ENCODE measurements at regions of chr3 and their contacts with region 1.

Region 1: DNA sequence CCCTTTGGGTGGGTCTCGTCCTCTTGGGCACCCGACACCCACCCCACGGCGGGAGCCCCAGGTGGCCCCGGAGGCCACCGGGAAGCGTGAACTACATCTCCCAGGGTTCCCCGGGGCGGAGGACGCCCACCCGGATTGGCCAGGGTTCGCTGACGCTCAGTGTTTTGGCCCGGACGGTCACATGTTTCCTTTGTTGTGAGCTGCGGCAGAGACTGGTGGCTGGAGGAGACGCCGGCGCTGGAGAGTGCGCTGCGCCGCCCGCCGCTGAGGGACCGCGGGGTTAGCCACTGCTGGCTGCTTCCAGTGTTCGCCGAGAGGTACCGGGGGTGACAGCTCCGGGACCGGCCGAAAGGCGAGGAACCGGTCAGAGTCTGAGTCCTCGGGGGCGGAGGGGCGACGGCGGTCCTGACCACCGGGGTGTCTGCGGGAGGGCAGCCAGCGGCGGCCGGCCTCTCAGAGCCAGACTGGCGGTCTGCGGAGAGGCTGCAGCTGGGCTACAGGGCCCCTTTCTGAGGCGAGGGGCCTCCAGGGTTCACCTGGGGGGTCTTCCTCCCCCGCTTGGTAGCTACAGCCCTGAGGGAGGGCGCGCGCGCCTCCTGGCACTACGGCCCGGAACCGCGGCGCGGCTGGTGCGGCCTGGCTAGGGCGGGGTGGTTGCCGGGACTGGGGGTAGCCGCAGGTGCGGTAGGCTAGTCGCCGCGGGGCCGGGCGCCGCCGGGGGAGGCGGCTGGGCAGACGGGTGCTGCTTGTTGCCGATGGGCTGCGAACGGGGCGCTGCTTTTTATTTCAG is at the start of gene KLHL24:
- DNase-seq: peak; percentile 95
- H3K4me3 Mint-ChIP-seq: peak within 1 kb of the TSS; percentile 92
- H3K27ac Mint-ChIP-seq: peak within 1 kb of the TSS; percentile 88
- H3K4me1 Mint-ChIP-seq: peaks cover 28% of the 10 kb centered on the region
- H3K27me3 Mint-ChIP-seq: no peaks in the 10 kb centered on the region
- total RNA-seq, gene KLHL24: 15.6 to 19.5 TPM

Region 2: GRCh38 chr3:183265834-183266417 is 369.7 kb before region 1 on chr3:
- CTCF ChIA-PET with region 1: no interaction called
- POLR2A ChIA-PET with region 1: no interaction called
- intact Hi-C with region 1: loop called (anchors 5 kb)
- DNase-seq: peak; percentile 71
- H3K4me3 Mint-ChIP-seq: peak overlapping the region; percentile 25
- H3K27ac Mint-ChIP-seq: no peak overlapping the region
- H3K4me1 Mint-ChIP-seq: peaks cover 1% of the 10 kb centered on the region
- H3K27me3 Mint-ChIP-seq: no peaks in the 10 kb centered on the region

Region 3: DNA sequence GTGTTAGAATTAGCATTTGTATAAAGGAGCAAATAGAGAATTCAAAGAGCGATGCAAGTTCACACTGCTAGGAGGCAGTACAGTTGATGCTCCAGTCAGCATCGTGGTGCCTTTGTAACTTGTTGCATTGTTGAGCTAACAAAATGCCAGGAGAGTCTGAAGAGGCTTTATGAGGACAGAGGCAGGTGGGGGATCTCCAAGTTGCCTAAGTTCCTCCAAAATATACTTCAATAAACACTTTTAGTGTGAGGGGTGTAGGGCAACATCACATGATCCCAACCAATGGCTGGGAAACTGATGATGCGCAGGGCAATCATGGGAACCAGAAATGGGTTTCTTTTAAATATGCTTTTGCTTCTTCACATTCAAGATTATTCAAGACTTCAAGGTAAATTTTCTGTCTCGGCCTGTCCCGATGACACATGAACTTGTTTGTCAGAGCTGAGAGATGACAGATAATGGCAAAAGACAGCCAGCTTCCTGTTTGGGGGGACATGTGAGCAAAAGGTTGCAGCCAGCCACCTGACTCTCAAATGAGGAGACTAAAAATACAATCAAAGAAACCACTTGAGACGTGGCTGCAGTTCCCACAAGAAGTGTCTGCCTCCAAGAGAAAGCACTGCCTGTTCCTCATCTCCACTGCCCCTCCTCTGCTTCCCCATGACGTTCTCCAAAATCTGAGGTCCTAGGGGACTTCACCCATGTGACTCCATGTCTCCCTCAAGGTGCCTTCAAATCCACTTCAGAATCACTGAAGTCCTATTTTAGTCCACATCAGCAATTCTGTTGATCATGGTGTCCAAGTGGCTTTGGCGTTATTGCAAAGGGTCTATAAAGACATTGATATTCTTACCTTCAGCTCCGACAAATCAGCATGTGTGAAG is 119.4 kb before region 1 on chr3:
- CTCF ChIA-PET with region 1: interaction called, 3 read pairs
- POLR2A ChIA-PET with region 1: interaction called, 3 read pairs
- intact Hi-C with region 1: loop called (anchors 1 kb)
- DNase-seq: peak; percentile 73
- H3K4me3 Mint-ChIP-seq: no peak overlapping the region
- H3K27ac Mint-ChIP-seq: peak overlapping the region; percentile 87
- H3K4me1 Mint-ChIP-seq: peaks cover 75% of the 10 kb centered on the region
- H3K27me3 Mint-ChIP-seq: no peaks in the 10 kb centered on the region

Region 4: DNA sequence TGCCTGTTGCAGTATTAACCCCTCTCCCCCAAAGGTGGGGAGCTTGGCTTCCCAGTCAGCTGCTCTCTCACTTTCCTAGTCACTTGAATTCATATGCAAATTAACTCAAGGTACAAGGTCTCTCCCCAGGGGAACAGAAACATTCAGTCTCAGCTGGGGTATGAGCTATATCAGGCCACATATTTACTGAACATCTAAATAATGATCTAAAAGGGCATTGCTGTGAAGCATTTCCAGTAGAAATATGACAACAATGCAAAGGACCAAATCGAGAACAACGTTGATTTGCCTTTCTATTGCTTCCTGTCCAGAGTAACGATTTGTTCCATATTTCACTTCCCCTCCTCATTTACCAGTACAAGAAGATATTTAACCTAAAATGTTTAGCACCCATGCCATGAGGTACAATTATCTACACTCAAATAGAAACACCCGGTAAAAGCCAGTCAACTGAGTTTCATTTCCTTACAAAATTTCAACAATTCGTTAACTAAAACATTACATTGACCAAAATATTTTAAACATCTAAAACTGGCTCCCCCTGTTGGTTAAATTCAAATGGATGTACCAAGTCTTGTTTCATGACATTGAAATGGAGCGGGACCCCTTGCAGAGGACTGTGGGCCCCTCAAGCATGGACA is 43.6 kb before region 1 on chr3:
- CTCF ChIA-PET with region 1: interaction called, 4 read pairs
- POLR2A ChIA-PET with region 1: no interaction called
- intact Hi-C with region 1: loop called (anchors 5 kb)
- DNase-seq: no peak
- H3K4me3 Mint-ChIP-seq: peak overlapping the region; percentile 59
- H3K27ac Mint-ChIP-seq: peak overlapping the region; percentile 69
- H3K4me1 Mint-ChIP-seq: peaks cover 32% of the 10 kb centered on the region
- H3K27me3 Mint-ChIP-seq: no peaks in the 10 kb centered on the region

Region 5: GRCh38 chr3:183766745-183767606 is 131.3 kb after region 1 on chr3:
- CTCF ChIA-PET with region 1: interaction called, 6 read pairs
- POLR2A ChIA-PET with region 1: no interaction called
- intact Hi-C with region 1: loop called (anchors 5 kb)
- DNase-seq: peak; percentile 81
- H3K4me3 Mint-ChIP-seq: no peak overlapping the region
- H3K27ac Mint-ChIP-seq: no peak overlapping the region
- H3K4me1 Mint-ChIP-seq: peaks cover 5% of the 10 kb centered on the region
- H3K27me3 Mint-ChIP-seq: no peaks in the 10 kb centered on the region

Region 6: DNA sequence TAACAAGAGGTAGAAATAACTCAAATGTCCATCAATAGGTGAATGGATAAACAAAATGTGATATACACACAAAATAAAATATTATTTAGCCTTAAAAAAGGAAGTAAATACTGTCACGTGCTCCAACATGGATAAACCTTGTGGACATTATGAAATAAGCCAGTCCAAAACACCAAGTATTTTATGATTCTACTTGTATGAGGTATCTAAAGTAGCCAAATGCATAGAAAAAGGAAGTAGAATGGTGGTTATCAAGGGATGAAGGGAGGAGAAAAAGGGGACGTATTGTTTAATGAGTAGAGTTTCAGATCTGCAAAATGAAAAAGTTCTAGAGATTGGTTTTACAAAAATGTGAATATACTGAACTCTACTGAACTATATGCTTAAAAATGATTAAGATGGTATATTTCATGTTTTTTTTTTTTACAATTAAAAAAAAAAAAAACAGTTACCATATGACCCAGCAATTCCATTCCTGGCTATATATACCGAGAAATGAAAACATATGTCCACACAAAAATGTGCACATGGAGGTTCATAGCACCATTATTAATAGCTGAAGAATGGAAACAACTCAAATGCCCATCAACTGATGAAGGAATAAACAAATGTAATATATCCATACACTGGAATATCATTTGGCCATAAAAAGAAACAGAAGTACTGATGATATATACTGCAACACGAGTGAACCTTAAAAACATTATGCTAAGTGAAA is 218.9 kb after region 1 on chr3:
- CTCF ChIA-PET with region 1: no interaction called
- POLR2A ChIA-PET with region 1: no interaction called
- intact Hi-C with region 1: no loop called
- DNase-seq: no peak
- H3K4me3 Mint-ChIP-seq: no peak overlapping the region
- H3K27ac Mint-ChIP-seq: no peak overlapping the region
- H3K4me1 Mint-ChIP-seq: no peaks in the 10 kb centered on the region
- H3K27me3 Mint-ChIP-seq: no peaks in the 10 kb centered on the region

Region 7: GRCh38 chr3:184765730-184766074 is 1130.1 kb after region 1 on chr3:
- CTCF ChIA-PET with region 1: no interaction called
- POLR2A ChIA-PET with region 1: no interaction called
- intact Hi-C with region 1: no loop called
- DNase-seq: no peak
- H3K4me3 Mint-ChIP-seq: no peak overlapping the region
- H3K27ac Mint-ChIP-seq: no peak overlapping the region
- H3K4me1 Mint-ChIP-seq: no peaks in the 10 kb centered on the region
- H3K27me3 Mint-ChIP-seq: peaks cover 11% of the 10 kb centered on the region

Measured in activated CD4-positive, alpha-beta memory T cell treated with anti-CD3 and anti-CD28 coated beads for 36 hours (primary cell).